GM12878 (cell line): ENCODE measurements at regions of chr7 and their contacts with region 1.

Region 1: GRCh38 chr7:142587578-142588191 is 161.6 kb upstream of the PRSS1 start:
- DNase-seq: peak; percentile 15
- ATAC-seq: peak; percentile 88
- H3K4me3 ChIP-seq: no peak overlapping the region
- H3K27ac ChIP-seq: no peak overlapping the region
- H3K4me1 ChIP-seq: 0 out of 2 replicates have a peak, but pooled peaks cover 4% of the 10 kb centered on the region
- H3K27me3 ChIP-seq: no peaks in the 10 kb centered on the region
- CTCF ChIP-seq: peak; percentile 75 to 93 (median 75); a peak in 5 of 6 replicates
- EP300 ChIP-seq: no peak
- POLR2A ChIP-seq: no peak
- RAD21 ChIP-seq: peak; percentile 48

Region 2: GRCh38 chr7:142412551-142413193 is 175.0 kb before region 1 on chr7:
- CTCF ChIA-PET with region 1: no interaction called
- POLR2A ChIA-PET with region 1: no interaction called
- RAD21 ChIA-PET with region 1: no interaction called
- SMC1A ChIA-PET with region 1: no interaction called
- in situ Hi-C with region 1: no loop called
- intact Hi-C with region 1: no loop called
- DNase-seq: no peak
- ATAC-seq: peak; percentile 90
- H3K4me3 ChIP-seq: no peak overlapping the region
- H3K27ac ChIP-seq: no peak overlapping the region
- H3K4me1 ChIP-seq: no peaks in the 10 kb centered on the region
- H3K27me3 ChIP-seq: no peaks in the 10 kb centered on the region
- CTCF ChIP-seq: peak; percentile 60 to 87 (median 73)
- EP300 ChIP-seq: no peak
- POLR2A ChIP-seq: no peak
- RAD21 ChIP-seq: peak; percentile 46

Region 3: GRCh38 chr7:142571581-142571980 is 16.1 kb before region 1 on chr7:
- CTCF ChIA-PET with region 1: interaction called, 8 read pairs
- POLR2A ChIA-PET with region 1: no interaction called
- RAD21 ChIA-PET with region 1: interaction called, 3 read pairs
- SMC1A ChIA-PET with region 1: interaction called, 16 read pairs
- in situ Hi-C with region 1: no loop called
- intact Hi-C with region 1: no loop called
- DNase-seq: no peak
- ATAC-seq: no peak
- H3K4me3 ChIP-seq: no peak overlapping the region
- H3K27ac ChIP-seq: no peak overlapping the region
- H3K4me1 ChIP-seq: no peaks in the 10 kb centered on the region
- H3K27me3 ChIP-seq: no peaks in the 10 kb centered on the region
- CTCF ChIP-seq: no peak
- EP300 ChIP-seq: no peak
- POLR2A ChIP-seq: no peak
- RAD21 ChIP-seq: no peak

Region 4: DNA sequence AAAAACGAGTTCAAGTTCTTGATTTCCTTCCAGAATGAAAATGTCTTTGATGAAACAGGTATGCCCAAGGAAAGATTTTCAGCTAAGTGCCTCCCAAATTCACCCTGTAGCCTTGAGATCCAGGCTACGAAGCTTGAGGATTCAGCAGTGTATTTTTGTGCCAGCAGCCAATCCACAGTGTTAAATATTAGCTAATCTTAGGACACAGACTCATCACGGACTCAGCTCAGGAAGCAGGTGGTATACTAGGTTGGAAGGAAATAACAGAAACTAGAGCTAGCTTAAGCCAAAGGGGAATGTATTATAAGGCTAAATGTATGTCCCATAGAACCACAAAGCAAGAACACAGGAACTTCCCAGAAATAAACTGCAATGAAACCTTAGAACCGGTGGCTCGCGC is 10.6 kb after region 1 on chr7:
- CTCF ChIA-PET with region 1: interaction called, 16 read pairs
- POLR2A ChIA-PET with region 1: interaction called, 4 read pairs
- RAD21 ChIA-PET with region 1: interaction called, 12 read pairs
- SMC1A ChIA-PET with region 1: interaction called, 9 read pairs
- in situ Hi-C with region 1: no loop called
- intact Hi-C with region 1: no loop called
- DNase-seq: no peak
- ATAC-seq: no peak
- H3K4me3 ChIP-seq: no peak overlapping the region
- H3K27ac ChIP-seq: no peak overlapping the region
- H3K4me1 ChIP-seq: no peaks in the 10 kb centered on the region
- H3K27me3 ChIP-seq: peaks cover 0 to 5% of the 10 kb centered on the region in 2 experiments; a peak in 1 of 4 replicates
- CTCF ChIP-seq: no peak
- EP300 ChIP-seq: no peak
- POLR2A ChIP-seq: no peak
- RAD21 ChIP-seq: no peak

Region 5: DNA sequence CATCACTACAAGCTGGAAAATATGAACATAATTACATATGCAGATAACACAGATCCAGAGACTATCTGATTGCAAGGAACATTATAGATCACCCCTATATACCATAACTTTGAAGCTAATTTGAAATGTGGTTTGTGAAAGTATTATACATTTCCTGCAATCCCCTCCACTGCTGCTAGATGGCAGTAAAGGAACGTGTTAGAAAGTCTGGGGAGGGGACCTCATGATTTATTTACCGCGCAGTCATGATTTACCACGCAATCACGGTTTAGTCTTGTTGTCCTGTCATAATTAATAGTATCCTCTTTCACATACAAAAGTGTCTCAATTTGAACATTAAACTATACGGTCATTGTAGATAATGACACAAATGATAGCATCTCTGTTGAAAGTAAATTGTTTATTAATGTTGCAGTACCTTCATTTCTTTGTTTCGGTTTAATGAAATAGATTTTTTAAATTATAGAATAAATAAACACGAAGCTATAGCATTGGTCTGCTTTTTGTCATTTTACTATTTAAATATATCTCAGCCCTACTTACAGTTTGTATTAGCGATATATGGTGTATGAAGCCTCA is 16.3 kb after region 1 on chr7:
- CTCF ChIA-PET with region 1: interaction called, 16 read pairs
- POLR2A ChIA-PET with region 1: interaction called, 4 read pairs
- RAD21 ChIA-PET with region 1: interaction called, 12 read pairs
- SMC1A ChIA-PET with region 1: interaction called, 9 read pairs
- in situ Hi-C with region 1: no loop called
- intact Hi-C with region 1: no loop called
- DNase-seq: no peak
- ATAC-seq: peak; percentile 74
- H3K4me3 ChIP-seq: no peak overlapping the region
- H3K27ac ChIP-seq: no peak overlapping the region
- H3K4me1 ChIP-seq: no peaks in the 10 kb centered on the region
- H3K27me3 ChIP-seq: no peaks in the 10 kb centered on the region
- CTCF ChIP-seq: peak; percentile 74 to 81 (median 81)
- EP300 ChIP-seq: no peak
- POLR2A ChIP-seq: no peak
- RAD21 ChIP-seq: peak; percentile 82

Region 6: GRCh38 chr7:142739923-142740492 is 152.3 kb after region 1 on chr7:
- CTCF ChIA-PET with region 1: no interaction called
- POLR2A ChIA-PET with region 1: no interaction called
- RAD21 ChIA-PET with region 1: no interaction called
- SMC1A ChIA-PET with region 1: no interaction called
- in situ Hi-C with region 1: no loop called
- intact Hi-C with region 1: no loop called
- DNase-seq: no peak
- ATAC-seq: peak; percentile 89
- H3K4me3 ChIP-seq: no peak overlapping the region
- H3K27ac ChIP-seq: no peak overlapping the region
- H3K4me1 ChIP-seq: peaks cover 3% of the 10 kb centered on the region; the same call in 1 of the 2 replicates
- H3K27me3 ChIP-seq: 0 out of 4 replicates have a peak, but pooled peaks cover 0 to under 1% of the 10 kb centered on the region in 2 experiments
- CTCF ChIP-seq: peak; percentile 29 to 42 (median 40); a peak in 5 of 6 replicates
- EP300 ChIP-seq: no peak
- POLR2A ChIP-seq: no peak
- RAD21 ChIP-seq: peak; percentile 29; the same call in 1 of the 2 replicates